Heart right ventricle (tissue), 16 donors: ENCODE measurements at regions of chr20 and their contacts with region 1.

Region 1: GRCh38 chr20:2752567-2753460 is 47.6 kb downstream of the CPXM1 start:
- DNase-seq: no peak
- ATAC-seq: peak in 1 of 8 donors; percentile 3
- H3K4me3 ChIP-seq: peak overlapping the region in 9 of 10 donors; percentile 40 to 57 (median 50)
- H3K27ac ChIP-seq: no peak overlapping the region
- H3K4me1 ChIP-seq: peaks cover 8 to 30% (median 25%) of the 10 kb centered on the region in 9 donors
- H3K27me3 ChIP-seq: peaks cover 5 to 87% (median 57%) of the 10 kb centered on the region in 7 donors
- CTCF ChIP-seq: peak; percentile 29 to 80 (median 62)

Region 2: GRCh38 chr20:2585811-2586210 is 167.0 kb before region 1 on chr20:
- intact Hi-C with region 1: no loop called
- DNase-seq: no peak
- ATAC-seq: no peak
- H3K4me3 ChIP-seq: no peak overlapping the region
- H3K27ac ChIP-seq: no peak overlapping the region
- H3K4me1 ChIP-seq: no peaks in the 10 kb centered on the region
- H3K27me3 ChIP-seq: peaks cover 0 to 34% (median 11%) of the 10 kb centered on the region in 7 donors
- CTCF ChIP-seq: no peak

Region 3: DNA sequence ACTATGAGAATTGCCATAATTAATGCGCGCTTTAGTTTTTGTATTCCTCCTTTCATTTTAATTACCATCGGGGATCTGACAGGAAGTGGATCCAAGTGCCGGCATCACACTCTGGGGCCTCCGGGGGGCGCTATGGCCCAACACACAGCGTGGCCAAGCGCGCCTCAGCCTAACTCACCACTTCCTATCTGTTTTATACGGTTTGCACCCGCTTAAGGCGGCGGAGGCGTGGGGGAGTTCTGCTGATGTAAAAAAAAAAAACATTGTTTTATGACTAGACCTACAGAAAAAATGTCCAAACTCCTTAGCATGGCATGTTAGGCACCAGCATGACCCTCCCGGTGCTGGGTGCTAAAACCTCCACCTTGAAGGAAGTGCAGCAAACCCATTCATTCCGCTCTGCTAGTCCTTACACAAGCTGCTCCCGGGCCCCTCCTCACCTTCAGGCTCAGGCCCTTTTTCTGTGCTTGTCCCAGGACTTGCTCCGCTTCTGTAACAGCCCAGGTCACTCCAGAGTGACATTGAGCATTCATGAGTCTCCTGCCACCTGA is 64.7 kb before region 1 on chr20:
- intact Hi-C with region 1: loop called in 1 of 10 experiments (anchors 5 kb)
- DNase-seq: peak; percentile 29 to 52
- ATAC-seq: peak in 3 of 8 donors; percentile 40 to 56 (median 46)
- H3K4me3 ChIP-seq: no peak overlapping the region
- H3K27ac ChIP-seq: no peak overlapping the region
- H3K4me1 ChIP-seq: peaks cover 0 to 18% (median 6%) of the 10 kb centered on the region in 9 donors
- H3K27me3 ChIP-seq: peaks cover 0 to 57% (median 10%) of the 10 kb centered on the region in 7 donors
- CTCF ChIP-seq: peak; percentile 25 to 74 (median 62)

Region 4: DNA sequence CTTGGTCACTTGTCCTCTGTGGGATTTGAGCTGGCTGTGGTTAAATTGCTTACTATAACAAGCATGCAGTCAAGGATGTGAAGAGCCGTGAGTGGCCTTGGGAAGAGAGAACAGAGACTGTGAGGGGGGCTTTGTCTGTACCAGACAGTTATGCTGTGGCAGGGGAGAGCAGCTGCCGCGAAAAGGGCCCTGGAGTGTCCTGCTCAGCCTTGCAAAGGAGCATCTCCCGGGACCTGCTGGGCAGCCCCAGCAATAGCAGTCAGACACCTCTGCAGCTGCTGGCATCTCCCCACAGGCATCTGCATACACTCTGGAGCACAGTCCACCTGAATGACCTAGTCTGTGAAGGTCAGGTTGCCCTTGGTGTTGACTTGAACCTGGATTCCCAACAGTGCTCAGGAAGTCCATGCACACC is 53.9 kb before region 1 on chr20:
- intact Hi-C with region 1: no loop called
- DNase-seq: no peak
- ATAC-seq: no peak
- H3K4me3 ChIP-seq: no peak overlapping the region
- H3K27ac ChIP-seq: no peak overlapping the region
- H3K4me1 ChIP-seq: peaks cover 0 to 6% (median 0%) of the 10 kb centered on the region in 9 donors
- H3K27me3 ChIP-seq: peaks cover 0 to 30% (median 8%) of the 10 kb centered on the region in 7 donors
- CTCF ChIP-seq: no peak

Region 5: GRCh38 chr20:2713285-2713684 is 39.5 kb before region 1 on chr20:
- intact Hi-C with region 1: no loop called
- DNase-seq: no peak
- ATAC-seq: no peak
- H3K4me3 ChIP-seq: no peak overlapping the region
- H3K27ac ChIP-seq: no peak overlapping the region
- H3K4me1 ChIP-seq: no peaks in the 10 kb centered on the region
- H3K27me3 ChIP-seq: peaks cover 0 to 8% (median 0%) of the 10 kb centered on the region in 7 donors
- CTCF ChIP-seq: peak in 1 of 9 donors; percentile 33

Region 6: DNA sequence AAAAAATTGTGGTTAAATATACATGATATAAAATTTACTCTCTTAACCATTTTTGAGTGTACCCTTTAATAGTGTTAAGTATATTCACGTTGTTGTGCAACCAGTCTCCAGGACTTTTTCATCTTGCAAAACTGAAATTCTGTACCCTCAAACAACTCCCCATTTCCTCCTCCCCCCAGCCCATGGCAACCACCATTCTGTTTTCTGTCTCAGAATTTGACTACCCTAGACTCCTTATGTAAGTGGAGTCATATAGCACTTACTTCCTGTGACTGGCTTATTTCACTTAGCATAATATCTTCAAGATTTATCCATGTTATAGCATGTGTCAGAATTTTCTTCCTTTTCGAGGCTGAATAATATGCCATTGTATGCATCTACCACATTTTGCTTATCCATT is 92.8 kb after region 1 on chr20:
- intact Hi-C with region 1: loop called in 6 of 10 experiments (anchors 5 to 10 kb)
- DNase-seq: no peak
- ATAC-seq: no peak
- H3K4me3 ChIP-seq: no peak overlapping the region
- H3K27ac ChIP-seq: no peak overlapping the region
- H3K4me1 ChIP-seq: peaks cover 0 to 13% (median 10%) of the 10 kb centered on the region in 9 donors
- H3K27me3 ChIP-seq: no peaks in the 10 kb centered on the region
- CTCF ChIP-seq: no peak

Region 7: DNA sequence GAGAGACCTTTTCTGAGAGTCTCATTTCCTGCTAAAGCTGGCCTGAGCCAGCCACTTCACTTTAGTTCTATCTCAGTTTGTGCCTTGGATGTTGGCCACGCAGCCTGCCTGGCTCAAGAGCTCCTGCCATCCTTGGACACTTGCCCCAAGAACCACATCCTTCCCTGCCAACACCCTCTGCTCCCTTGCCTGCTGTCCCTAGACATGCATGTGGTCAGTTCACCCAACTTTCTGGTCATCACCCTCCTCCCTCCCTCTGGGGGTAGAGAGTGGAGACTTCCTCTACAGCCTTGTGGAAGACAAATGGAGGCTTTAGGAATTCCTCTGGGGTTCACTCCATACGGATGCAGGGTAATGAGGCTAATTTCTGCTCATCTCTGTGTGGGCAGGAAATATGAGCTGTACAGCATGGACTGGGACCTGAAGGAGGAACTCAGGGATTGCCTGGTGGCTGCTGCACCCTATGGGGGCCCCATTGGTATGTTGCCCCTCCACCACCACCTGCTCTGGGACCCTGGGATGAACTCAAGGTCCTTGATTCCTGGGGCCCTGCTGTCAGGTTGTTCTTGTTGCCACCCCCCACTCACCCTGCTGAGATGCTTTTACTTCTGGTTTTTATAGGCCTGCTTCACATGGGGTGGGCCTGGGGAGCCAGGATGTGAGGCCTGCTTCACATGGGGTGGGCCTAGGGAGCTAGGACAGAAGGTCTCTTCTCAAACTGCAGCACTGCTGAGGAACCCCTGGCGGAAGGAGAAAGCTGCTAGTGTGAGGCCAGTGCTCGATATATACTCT is 106.7 kb after region 1 on chr20:
- intact Hi-C with region 1: loop called in 4 of 10 experiments (anchors 5 to 10 kb)
- DNase-seq: no peak
- ATAC-seq: peak in 6 of 8 donors; percentile 46 to 66 (median 58)
- H3K4me3 ChIP-seq: no peak overlapping the region
- H3K27ac ChIP-seq: no peak overlapping the region
- H3K4me1 ChIP-seq: peaks cover 0 to 15% (median 6%) of the 10 kb centered on the region in 9 donors
- H3K27me3 ChIP-seq: no peaks in the 10 kb centered on the region
- CTCF ChIP-seq: no peak

Region 8: GRCh38 chr20:3000852-3001523 is 248.2 kb after region 1 on chr20:
- intact Hi-C with region 1: loop called in 5 of 10 experiments (anchors 10 kb)
- DNase-seq: peak in 1 of 2 donors; percentile 10
- ATAC-seq: peak in 2 of 8 donors; percentile 61
- H3K4me3 ChIP-seq: no peak overlapping the region
- H3K27ac ChIP-seq: no peak overlapping the region
- H3K4me1 ChIP-seq: no peaks in the 10 kb centered on the region
- H3K27me3 ChIP-seq: no peaks in the 10 kb centered on the region
- CTCF ChIP-seq: peak in 8 of 9 donors; percentile 34 to 70 (median 49)